PC-9 (cell line): ENCODE measurements at regions of chr1 and their contacts with region 1.

Region 1: GRCh38 chr1:167893798-167894197 is 20.1 kb downstream of the ADCY10 start:
- DNase-seq: no peak
- H3K4me3 ChIP-seq: no peak overlapping the region
- H3K27ac ChIP-seq: no peak overlapping the region
- H3K4me1 ChIP-seq: no peaks in the 10 kb centered on the region
- H3K27me3 ChIP-seq: no peaks in the 10 kb centered on the region
- CTCF ChIP-seq: no peak

Region 2: GRCh38 chr1:167763525-167764220 is 130.1 kb before region 1 on chr1:
- CTCF ChIA-PET with region 1: no interaction called
- POLR2A ChIA-PET with region 1: no interaction called
- intact Hi-C with region 1: no loop called
- DNase-seq: no peak
- H3K4me3 ChIP-seq: no peak overlapping the region
- H3K27ac ChIP-seq: no peak overlapping the region
- H3K4me1 ChIP-seq: no peaks in the 10 kb centered on the region
- H3K27me3 ChIP-seq: no peaks in the 10 kb centered on the region
- CTCF ChIP-seq: no peak

Region 3: DNA sequence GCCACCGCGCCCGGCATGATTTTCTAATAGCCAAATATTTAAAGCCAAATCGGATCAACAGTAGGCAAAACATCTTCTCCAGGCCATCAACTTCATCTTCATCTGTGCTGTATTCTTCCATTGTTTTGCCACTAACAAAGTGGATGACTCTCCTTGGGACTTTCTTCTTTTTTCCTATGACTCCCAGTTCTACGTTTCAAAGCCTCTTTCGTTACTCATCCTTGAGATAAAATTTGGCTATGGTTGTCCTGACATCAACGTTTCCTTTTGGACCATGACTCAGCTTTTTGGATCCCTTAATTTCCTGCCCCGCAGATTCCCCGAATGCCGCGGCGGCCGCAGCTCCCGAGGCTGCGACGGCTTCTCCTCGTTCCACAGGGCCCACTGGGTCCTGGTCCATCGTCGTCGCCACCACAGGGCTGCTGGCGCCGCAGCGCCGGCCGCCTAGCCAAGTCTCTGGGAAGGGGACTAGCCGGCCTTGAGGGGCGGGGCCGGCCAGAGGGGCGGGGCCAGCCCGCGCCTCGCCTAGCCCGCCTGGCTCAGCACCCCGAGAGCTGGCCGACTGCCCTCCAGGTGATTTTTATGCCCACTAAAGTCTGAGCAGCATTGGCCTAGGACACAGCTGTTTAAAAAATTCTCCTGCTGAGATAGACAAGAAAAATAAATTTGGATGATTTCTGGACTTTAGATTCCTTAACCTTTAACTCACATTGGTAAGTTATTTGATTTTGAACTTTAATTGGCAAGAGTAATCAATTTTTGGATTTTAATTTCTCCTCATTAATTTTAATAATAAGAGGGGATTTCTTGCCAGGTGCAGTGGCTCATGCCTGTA is 73.7 kb before region 1 on chr1:
- CTCF ChIA-PET with region 1: no interaction called
- POLR2A ChIA-PET with region 1: interaction called, 23 read pairs
- intact Hi-C with region 1: no loop called
- DNase-seq: peak; percentile 60 to 89
- H3K4me3 ChIP-seq: peak overlapping the region; percentile 51
- H3K27ac ChIP-seq: peak overlapping the region; percentile 66
- H3K4me1 ChIP-seq: peaks cover 27% of the 10 kb centered on the region
- H3K27me3 ChIP-seq: no peaks in the 10 kb centered on the region
- CTCF ChIP-seq: no peak

Region 4: DNA sequence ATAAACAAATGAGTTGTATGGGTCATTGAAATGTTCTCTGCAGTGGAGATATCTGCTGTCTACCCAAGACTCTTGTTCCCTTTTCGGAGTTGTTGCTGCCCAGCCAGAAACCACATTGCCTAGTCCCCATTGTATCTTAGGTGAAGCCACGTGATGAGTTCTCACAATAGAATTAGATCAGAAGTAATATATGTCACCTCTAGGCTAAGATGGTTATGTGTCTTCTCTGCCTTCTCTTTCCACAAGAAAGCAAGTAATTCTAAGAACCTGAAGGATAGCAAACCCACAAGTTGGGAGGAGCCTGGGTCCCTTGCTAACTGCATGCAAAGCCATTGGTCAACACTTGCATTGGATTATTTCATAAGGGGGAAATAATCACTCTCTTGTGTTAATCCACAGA is 56.5 kb before region 1 on chr1:
- CTCF ChIA-PET with region 1: no interaction called
- POLR2A ChIA-PET with region 1: no interaction called
- intact Hi-C with region 1: no loop called
- DNase-seq: no peak
- H3K4me3 ChIP-seq: no peak overlapping the region
- H3K27ac ChIP-seq: no peak overlapping the region
- H3K4me1 ChIP-seq: no peaks in the 10 kb centered on the region
- H3K27me3 ChIP-seq: no peaks in the 10 kb centered on the region
- CTCF ChIP-seq: no peak